Body of pancreas (tissue), 4 donors: ENCODE measurements at regions of chr17 and their contacts with region 1.

Region 1: DNA sequence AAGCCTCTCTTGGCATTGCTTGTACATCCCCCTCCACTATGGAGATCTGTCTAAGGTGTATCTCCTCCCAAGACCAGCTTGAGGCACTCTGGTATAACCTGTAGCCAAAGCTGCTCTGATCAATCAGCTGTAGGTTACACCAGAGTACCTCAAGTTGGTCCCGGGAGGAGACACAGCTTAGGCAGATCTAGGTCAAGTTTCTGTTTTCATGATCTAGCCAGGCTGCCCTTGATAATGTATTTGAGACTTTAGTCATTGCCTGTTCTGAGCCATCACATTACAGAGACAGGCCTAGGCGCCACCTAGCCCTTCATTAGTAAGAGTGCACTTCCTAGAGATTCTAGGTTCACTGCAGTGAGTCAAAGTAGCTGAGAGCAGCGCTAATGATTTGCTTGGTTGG is 31.4 kb downstream of the ASGR1 start:
- DNase-seq: no peak
- ATAC-seq: no peak
- H3K4me3 ChIP-seq: no peak overlapping the region
- H3K27ac ChIP-seq: no peak overlapping the region
- H3K4me1 ChIP-seq: no peaks in the 10 kb centered on the region
- H3K27me3 ChIP-seq: no peaks in the 10 kb centered on the region
- CTCF ChIP-seq: no peak
- POLR2A ChIP-seq: no peak

Region 2: GRCh38 chr17:6627019-6627418 is 520.8 kb before region 1 on chr17:
- intact Hi-C with region 1: no loop called
- DNase-seq: no peak
- ATAC-seq: no peak
- H3K4me3 ChIP-seq: no peak overlapping the region
- H3K27ac ChIP-seq: no peak overlapping the region
- H3K4me1 ChIP-seq: no peaks in the 10 kb centered on the region
- H3K27me3 ChIP-seq: no peaks in the 10 kb centered on the region
- CTCF ChIP-seq: no peak
- POLR2A ChIP-seq: no peak

Region 3: GRCh38 chr17:7204828-7205461 is 57.2 kb after region 1 on chr17:
- intact Hi-C with region 1: loop called (anchors 10 kb)
- DNase-seq: peak; percentile 73 to 87 (median 82)
- ATAC-seq: peak; percentile 81
- H3K4me3 ChIP-seq: no peak overlapping the region
- H3K27ac ChIP-seq: peak overlapping the region in 3 of 4 donors; percentile 5 to 36 (median 17)
- H3K4me1 ChIP-seq: peaks cover 8% of the 10 kb centered on the region
- H3K27me3 ChIP-seq: no peaks in the 10 kb centered on the region
- CTCF ChIP-seq: no peak
- POLR2A ChIP-seq: peak in 1 of 3 donors; percentile 12